ENCODE measurements at regions of chr9 and their contacts with region 1.

Region 1: DNA sequence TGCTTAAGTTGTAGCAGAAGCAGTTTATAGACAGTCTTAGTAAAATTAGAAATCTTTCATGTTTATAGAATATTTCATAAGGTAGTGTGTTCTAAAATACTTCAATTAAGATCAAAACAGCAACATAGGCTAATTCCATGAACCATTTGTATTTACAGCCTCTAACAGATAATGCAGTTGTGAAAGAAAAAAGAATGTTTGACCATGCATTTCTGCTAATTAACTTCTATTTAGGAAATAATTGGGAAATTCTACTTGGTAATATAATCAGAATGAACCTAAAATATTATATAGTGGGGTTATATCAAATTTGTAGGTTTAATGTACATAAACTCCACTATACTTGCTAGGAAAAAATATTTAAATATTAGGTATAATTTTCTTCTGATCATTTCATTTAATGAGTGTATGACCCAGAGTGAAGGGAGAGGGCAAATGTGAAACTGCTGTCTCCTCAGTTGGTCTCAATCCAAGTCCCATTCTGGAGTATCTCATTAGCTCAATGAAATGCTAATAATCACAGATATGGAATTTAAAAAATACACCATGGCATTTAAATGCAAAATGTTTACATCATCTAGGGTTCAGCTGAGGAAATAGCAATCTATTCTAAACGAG is 34.9 kb downstream of the ALDH1A1 start:
- DNase-seq: no peak
- H3K4me3 Mint-ChIP-seq: no peak overlapping the region
- H3K27ac Mint-ChIP-seq: no peak overlapping the region
- H3K4me1 Mint-ChIP-seq: no peaks in the 10 kb centered on the region
- H3K27me3 Mint-ChIP-seq: no peaks in the 10 kb centered on the region
- CTCF ChIP-seq: no peak

Region 2: GRCh38 chr9:72193478-72193881 is 724.5 kb before region 1 on chr9:
- CTCF ChIA-PET with region 1: interaction called, 10 read pairs
- intact Hi-C with region 1: no loop called
- DNase-seq: no peak
- H3K4me3 Mint-ChIP-seq: no peak overlapping the region
- H3K27ac Mint-ChIP-seq: no peak overlapping the region
- H3K4me1 Mint-ChIP-seq: no peaks in the 10 kb centered on the region
- H3K27me3 Mint-ChIP-seq: no peaks in the 10 kb centered on the region
- CTCF ChIP-seq: no peak